Gastrocnemius medialis (tissue), 4 donors: ENCODE measurements at regions of chr5 and their contacts with region 1.

Region 1: DNA sequence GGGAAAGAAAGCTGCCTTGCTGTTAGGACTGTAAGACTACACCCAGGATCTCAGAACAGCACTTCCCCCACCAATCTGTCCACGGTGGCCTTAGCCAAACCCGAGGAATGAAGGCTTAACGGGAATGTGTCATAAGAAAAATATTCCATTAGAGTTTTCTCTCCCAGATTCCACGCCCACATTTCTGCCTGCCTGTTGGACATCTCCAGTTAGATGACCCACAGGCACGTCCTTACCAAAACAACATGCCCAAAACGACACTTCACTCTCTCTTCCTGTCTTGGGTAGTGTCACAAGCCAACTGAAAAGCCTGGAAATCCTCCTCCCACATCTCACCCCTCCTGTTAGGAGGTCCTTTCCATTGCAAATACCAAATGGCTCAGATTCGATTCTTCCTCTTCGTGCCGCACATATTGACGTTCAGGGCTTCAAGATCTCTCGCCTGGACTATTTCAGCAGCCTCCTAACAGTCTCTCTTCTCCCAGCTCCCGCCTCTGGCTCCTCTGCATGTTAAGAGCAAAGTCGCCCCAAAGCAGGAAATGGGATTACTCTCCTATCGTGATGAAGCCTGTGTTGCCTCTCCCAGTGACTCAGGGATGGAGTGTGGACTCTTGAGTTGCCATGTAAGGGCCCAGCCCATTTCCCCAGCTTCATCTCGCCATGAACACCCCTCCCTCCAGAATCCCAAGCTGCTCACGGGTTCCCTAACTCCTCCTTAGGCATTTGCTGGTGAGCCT is 159.3 kb downstream of the NR3C1 start:
- DNase-seq: peak; percentile 81 to 85
- ATAC-seq: peak; percentile 70 to 75
- H3K4me3 ChIP-seq: peak overlapping the region; percentile 2 to 45 (median 8)
- H3K27ac ChIP-seq: peak overlapping the region; percentile 85 to 95 (median 92)
- H3K4me1 ChIP-seq: peaks cover 39 to 49% of the 10 kb centered on the region in 2 donors
- H3K27me3 ChIP-seq: no peaks in the 10 kb centered on the region
- CTCF ChIP-seq: no peak
- POLR2A ChIP-seq: no peak

Region 2: GRCh38 chr5:143134900-143135299 is 109.3 kb before region 1 on chr5:
- in situ Hi-C with region 1: loop called in 1 of 4 experiments (anchors 10 kb)
- intact Hi-C with region 1: loop called (anchors 5 kb)
- DNase-seq: peak in 1 of 2 donors; percentile 50
- ATAC-seq: peak; percentile 3 to 14
- H3K4me3 ChIP-seq: peak overlapping the region in 2 of 4 donors; percentile 47 to 50
- H3K27ac ChIP-seq: peak overlapping the region; percentile 90 to 97 (median 95)
- H3K4me1 ChIP-seq: peaks cover 90 to 92% of the 10 kb centered on the region in 2 donors
- H3K27me3 ChIP-seq: no peaks in the 10 kb centered on the region
- CTCF ChIP-seq: no peak
- POLR2A ChIP-seq: peak; percentile 22 to 29

Region 3: DNA sequence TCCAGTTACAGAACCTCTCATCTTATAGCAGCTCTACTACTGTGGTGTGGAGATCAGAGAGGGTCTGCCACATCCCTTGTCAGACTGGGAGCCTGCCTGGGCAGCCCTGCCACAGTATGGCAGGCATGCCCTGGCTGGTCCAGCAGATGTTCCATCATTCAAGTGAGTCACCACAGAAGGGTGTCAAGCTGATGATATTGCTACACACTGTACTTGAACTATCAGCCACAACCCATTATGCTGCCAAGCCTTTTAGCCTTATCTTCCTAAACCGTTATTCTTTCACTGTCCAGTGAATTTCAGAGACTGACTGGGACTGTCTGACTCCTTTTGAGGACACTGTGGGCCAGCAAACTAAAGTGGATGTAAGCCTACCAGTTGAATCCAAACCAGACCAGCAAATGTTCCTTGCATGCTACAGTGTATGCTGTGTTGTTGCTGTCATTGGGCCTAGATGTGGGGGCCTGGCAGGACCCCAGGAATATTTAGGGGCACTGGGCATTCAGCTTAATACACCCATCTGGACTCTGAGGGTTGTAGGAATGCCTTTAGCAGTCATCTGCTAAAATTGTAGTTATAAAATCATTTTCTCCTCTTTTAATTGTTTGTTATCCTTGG is 43.3 kb before region 1 on chr5:
- in situ Hi-C with region 1: no loop called
- intact Hi-C with region 1: loop called (anchors 2 kb)
- DNase-seq: peak; percentile 75 to 82
- ATAC-seq: peak; percentile 99 to 100
- H3K4me3 ChIP-seq: no peak overlapping the region
- H3K27ac ChIP-seq: peak overlapping the region; percentile 63 to 84 (median 72)
- H3K4me1 ChIP-seq: peaks cover 32 to 34% of the 10 kb centered on the region in 2 donors
- H3K27me3 ChIP-seq: no peaks in the 10 kb centered on the region
- CTCF ChIP-seq: no peak
- POLR2A ChIP-seq: no peak

Region 4: GRCh38 chr5:143314659-143315058 is 70.5 kb after region 1 on chr5:
- in situ Hi-C with region 1: no loop called
- intact Hi-C with region 1: loop called (anchors 5 kb)
- DNase-seq: no peak
- ATAC-seq: peak in 1 of 2 donors; percentile 29
- H3K4me3 ChIP-seq: no peak overlapping the region
- H3K27ac ChIP-seq: peak overlapping the region; percentile 85 to 89 (median 86)
- H3K4me1 ChIP-seq: peaks cover 77% of the 10 kb centered on the region in 2 donors
- H3K27me3 ChIP-seq: no peaks in the 10 kb centered on the region
- CTCF ChIP-seq: no peak
- POLR2A ChIP-seq: no peak